ENCODE measurements at regions of chr14 and their contacts with region 1.

Region 1: DNA sequence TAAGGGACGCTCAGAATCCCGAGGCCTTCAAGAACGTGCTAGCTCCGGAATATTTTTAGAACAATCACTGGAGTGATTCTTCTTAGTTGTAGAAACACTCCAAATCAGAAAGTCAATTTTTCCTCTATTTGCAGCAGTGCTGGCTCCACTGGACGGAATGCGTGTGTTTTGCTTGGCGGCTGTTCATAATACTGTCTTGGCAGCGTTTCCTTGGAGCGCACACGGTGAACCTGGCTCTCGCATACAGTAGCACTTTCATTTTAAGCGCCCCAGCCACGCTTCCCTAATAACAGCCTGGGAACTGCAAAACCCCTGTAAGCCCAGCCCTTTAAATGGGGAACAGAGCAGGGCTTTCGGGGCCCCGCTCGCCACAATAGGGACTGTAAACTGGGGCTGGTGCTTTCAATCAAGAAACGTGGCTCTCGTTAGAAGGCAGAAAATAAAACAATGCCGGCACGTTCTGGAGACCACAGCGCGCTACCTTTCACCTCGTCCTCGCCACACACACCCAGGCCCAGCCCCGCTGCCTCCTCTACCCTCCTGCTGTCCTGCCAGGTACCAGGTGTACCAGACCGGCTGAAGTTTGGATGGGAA is 79.9 kb downstream of the BCL11B start:
- DNase-seq: no peak
- ATAC-seq: peak; percentile 16
- H3K4me3 Mint-ChIP-seq: peak overlapping the region; percentile 88
- H3K27ac Mint-ChIP-seq: peak overlapping the region; percentile 95
- H3K4me1 Mint-ChIP-seq: peaks cover 86% of the 10 kb centered on the region
- H3K27me3 Mint-ChIP-seq: no peaks in the 10 kb centered on the region

Region 2: DNA sequence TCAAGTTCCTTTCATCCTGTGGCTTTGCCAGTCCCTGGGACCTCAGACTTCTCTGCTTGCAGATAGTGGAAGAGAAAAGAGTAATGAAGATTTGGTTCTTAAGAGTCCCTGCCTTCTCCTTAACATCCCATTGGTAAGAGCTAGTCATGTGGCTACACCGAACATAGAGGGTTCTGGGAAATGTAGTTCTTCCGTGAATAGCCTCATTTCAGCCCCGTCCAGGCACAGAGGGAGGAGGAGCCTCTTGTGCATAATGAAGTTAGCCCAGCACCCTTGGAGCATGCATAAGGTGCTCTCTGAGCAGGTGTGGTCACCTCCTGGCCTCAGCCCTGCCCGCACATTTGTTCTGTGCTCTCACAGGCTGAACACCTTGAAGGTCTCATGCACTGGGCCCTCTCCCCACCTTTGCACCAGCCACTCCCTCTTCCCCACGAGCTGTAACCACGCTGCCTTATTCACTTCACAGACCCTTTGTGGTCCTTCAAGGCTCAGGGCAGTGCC is 54.1 kb before region 1 on chr14:
- POLR2A ChIA-PET with region 1: no interaction called
- DNase-seq: no peak
- ATAC-seq: peak; percentile 62
- H3K4me3 Mint-ChIP-seq: peak overlapping the region; percentile 52
- H3K27ac Mint-ChIP-seq: peak overlapping the region; percentile 8
- H3K4me1 Mint-ChIP-seq: peaks cover 8% of the 10 kb centered on the region
- H3K27me3 Mint-ChIP-seq: peaks cover 2% of the 10 kb centered on the region

Region 3: GRCh38 chr14:99271951-99272631 is 80.0 kb after region 1 on chr14 and contains the start of gene BCL11B:
- POLR2A ChIA-PET with region 1: interaction called, 36 read pairs
- DNase-seq: peak; percentile 87
- ATAC-seq: peak; percentile 77
- H3K4me3 Mint-ChIP-seq: peak within 1 kb of the TSS; percentile 98
- H3K27ac Mint-ChIP-seq: peak within 1 kb of the TSS; percentile 99
- H3K4me1 Mint-ChIP-seq: peaks cover 26% of the 10 kb centered on the region
- H3K27me3 Mint-ChIP-seq: peaks cover 16% of the 10 kb centered on the region
- total RNA-seq, gene BCL11B: 99.5 to 104 TPM